ENCODE measurements at regions of chr14 and their contacts with region 1.

Region 1: DNA sequence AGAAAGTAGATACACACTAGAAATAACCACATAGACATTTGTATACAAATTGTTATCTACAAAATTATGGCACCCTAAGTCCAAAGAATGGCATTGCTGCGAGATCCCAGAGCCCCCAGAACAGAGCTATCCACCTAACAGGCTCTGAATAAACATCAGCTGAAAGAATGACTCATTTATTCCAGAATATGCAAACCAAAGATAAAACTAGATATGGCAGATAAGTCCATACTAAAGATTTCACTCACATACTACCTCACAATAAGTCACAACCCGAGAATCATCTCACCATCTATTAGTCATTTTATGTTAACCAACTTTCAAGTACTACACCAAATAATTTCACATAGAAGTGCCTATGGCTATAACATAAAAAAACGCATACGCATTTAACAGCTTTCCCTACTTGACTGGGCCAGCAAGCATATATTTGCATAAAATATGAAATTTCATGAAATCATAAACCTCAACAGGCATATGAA is 5.6 kb downstream of the CNIH1 start:
- DNase-seq: peak; percentile 84
- H3K4me3 ChIP-seq: no peak overlapping the region
- H3K27ac ChIP-seq: peak overlapping the region; percentile 13
- H3K4me1 ChIP-seq: peaks cover 24% of the 10 kb centered on the region
- H3K27me3 ChIP-seq: no peaks in the 10 kb centered on the region
- CTCF ChIP-seq: no peak
- POLR2A ChIP-seq: no peak

Region 2: DNA sequence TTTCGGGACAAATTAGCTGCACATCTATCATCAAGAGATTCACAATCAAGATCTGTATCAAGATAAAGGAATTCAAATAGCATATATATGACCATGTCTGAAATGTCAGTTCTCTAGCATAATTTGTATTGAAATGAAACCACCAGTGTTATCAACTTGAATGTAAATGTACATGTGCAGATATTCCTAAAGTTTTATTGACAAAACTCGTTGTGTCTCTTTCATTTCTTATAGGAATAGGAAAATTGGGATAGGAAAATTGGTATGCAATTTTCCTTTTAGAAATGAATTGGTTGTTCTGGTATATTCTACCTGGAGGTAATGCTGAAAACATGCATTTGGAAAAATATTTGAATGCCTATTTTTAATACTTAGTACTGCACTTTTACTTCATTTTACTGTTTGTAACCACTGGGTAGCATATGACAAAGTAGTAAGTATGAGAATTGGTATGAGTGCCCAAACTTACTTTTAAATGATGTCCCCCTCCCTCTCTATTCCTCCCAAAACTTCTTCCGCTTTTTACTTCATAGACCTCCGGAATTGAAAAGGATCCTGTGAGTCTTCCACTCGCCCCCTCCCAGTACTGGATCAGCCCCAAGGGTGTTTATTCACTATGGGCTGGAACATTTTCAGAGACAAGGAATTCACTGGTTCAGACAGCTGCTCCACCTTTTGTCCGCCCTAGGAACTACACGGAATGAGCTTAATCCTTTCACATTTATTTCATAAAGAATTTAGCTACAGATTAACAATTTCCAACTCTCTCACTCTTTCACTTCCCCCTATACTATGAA is 15.3 kb before region 1 on chr14:
- CTCF ChIA-PET with region 1: interaction called, 17 read pairs
- POLR2A ChIA-PET with region 1: no interaction called
- dilution Hi-C with region 1: no loop called
- intact Hi-C with region 1: no loop called
- DNase-seq: peak; percentile 75
- H3K4me3 ChIP-seq: no peak overlapping the region
- H3K27ac ChIP-seq: no peak overlapping the region
- H3K4me1 ChIP-seq: no peaks in the 10 kb centered on the region
- H3K27me3 ChIP-seq: no peaks in the 10 kb centered on the region
- CTCF ChIP-seq: peak; percentile 49 to 57
- POLR2A ChIP-seq: no peak

Region 3: DNA sequence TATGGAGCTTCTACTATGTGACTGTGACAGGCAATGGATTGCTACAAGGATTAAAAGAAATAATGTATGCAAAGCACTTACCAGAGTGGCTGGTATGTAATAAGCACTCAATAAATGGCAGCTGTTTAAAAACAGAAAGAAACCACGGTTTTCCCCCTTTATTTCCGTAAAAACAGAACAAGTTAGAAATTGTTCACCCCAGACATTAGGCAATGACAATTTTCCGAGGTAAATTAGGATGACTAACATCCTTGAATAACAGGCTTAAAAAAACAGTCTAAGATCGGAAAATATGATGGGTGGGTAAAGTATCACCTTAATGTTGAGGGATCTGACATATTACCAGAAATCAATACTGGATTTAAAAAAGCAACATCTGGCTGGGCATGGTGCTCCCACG is 26.5 kb after region 1 on chr14:
- CTCF ChIA-PET with region 1: no interaction called
- POLR2A ChIA-PET with region 1: no interaction called
- dilution Hi-C with region 1: no loop called
- intact Hi-C with region 1: no loop called
- DNase-seq: peak; percentile 34
- H3K4me3 ChIP-seq: no peak overlapping the region
- H3K27ac ChIP-seq: no peak overlapping the region
- H3K4me1 ChIP-seq: peaks cover 5% of the 10 kb centered on the region
- H3K27me3 ChIP-seq: peaks cover 25 to 29% of the 10 kb centered on the region in 2 experiments
- CTCF ChIP-seq: no peak
- POLR2A ChIP-seq: no peak

Measured in endothelial cell of umbilical vein (primary cell).